ENCODE measurements at regions of chr16 and their contacts with region 1.

Region 1: GRCh38 chr16:49857423-49858181 is 1.7 kb upstream of the ZNF423 start:
- DNase-seq: peak; percentile 51
- H3K4me3 Mint-ChIP-seq: peak overlapping the region; percentile 61
- H3K27ac Mint-ChIP-seq: no peak overlapping the region
- H3K4me1 Mint-ChIP-seq: peaks cover 14% of the 10 kb centered on the region
- H3K27me3 Mint-ChIP-seq: peaks cover 46% of the 10 kb centered on the region

Region 2: DNA sequence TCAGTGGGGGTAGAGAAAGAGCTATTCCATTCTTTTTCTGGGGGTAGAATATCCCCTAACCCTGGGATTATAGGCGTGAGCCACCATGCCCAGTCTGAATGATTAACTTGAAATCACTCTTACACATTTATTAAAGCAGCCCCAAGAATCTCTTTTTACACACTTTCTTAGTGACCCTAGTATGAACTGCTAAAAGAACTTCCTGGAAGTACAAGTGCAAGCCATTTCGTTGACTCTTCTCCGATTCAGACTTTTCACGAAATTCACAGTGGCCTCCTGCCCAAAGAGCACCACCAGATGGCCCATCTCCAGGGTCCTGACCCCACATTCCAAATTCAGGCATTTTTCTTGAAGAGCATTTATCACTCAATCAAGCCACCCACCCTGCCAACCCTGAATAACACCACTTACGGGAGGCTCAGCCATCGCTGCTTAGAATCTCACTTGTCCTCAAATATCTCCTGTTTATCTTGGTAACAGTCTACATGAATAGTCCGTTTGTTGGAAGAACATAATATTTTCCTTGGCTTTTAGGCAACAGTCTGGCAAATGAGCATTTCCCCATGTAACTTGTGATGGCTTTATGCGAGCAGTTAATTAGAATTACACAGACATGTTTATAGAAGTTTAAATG is 29.7 kb before region 1 on chr16:
- CTCF ChIA-PET with region 1: no interaction called
- POLR2A ChIA-PET with region 1: no interaction called
- DNase-seq: no peak
- H3K4me3 Mint-ChIP-seq: no peak overlapping the region
- H3K27ac Mint-ChIP-seq: no peak overlapping the region
- H3K4me1 Mint-ChIP-seq: no peaks in the 10 kb centered on the region
- H3K27me3 Mint-ChIP-seq: peaks cover 6% of the 10 kb centered on the region

Region 3: GRCh38 chr16:49867796-49868668 is 10.4 kb after region 1 on chr16:
- CTCF ChIA-PET with region 1: interaction called, 11 read pairs
- POLR2A ChIA-PET with region 1: no interaction called
- DNase-seq: no peak
- H3K4me3 Mint-ChIP-seq: no peak overlapping the region
- H3K27ac Mint-ChIP-seq: no peak overlapping the region
- H3K4me1 Mint-ChIP-seq: no peaks in the 10 kb centered on the region
- H3K27me3 Mint-ChIP-seq: peaks cover 14% of the 10 kb centered on the region

Region 4: DNA sequence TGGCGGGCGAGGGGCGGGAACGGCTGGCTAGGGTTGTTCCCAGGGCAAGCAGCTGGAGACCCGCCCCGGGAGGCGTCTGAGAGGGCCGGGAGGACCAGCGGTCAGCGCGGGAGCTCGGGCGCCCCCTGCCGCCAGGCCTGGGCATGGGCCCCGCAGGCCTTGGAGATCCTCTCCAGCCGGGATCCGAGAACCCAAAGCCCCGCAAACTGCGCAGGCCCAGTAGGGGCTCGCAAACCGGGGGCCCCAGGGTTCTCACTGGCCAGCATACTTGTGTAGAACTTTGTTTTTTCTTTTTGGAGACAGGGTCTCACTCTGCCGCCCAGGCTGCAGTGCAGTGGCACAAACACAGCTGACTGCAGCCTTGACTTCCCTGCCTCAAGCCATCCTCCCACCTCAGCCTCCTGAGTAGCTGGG is 19.1 kb after region 1 on chr16:
- CTCF ChIA-PET with region 1: interaction called, 13 read pairs
- POLR2A ChIA-PET with region 1: no interaction called
- DNase-seq: peak; percentile 41
- H3K4me3 Mint-ChIP-seq: no peak overlapping the region
- H3K27ac Mint-ChIP-seq: no peak overlapping the region
- H3K4me1 Mint-ChIP-seq: no peaks in the 10 kb centered on the region
- H3K27me3 Mint-ChIP-seq: peaks cover 28% of the 10 kb centered on the region

Region 5: GRCh38 chr16:50067290-50067853 is 209.8 kb after region 1 on chr16:
- CTCF ChIA-PET with region 1: no interaction called
- POLR2A ChIA-PET with region 1: no interaction called
- DNase-seq: peak; percentile 55
- H3K4me3 Mint-ChIP-seq: peak overlapping the region; percentile 87
- H3K27ac Mint-ChIP-seq: peak overlapping the region; percentile 77
- H3K4me1 Mint-ChIP-seq: peaks cover 49% of the 10 kb centered on the region
- H3K27me3 Mint-ChIP-seq: no peaks in the 10 kb centered on the region

Measured in activated CD4-positive, alpha-beta memory T cell treated with anti-CD3 and anti-CD28 coated beads, Interleukin-2, amount 10 ng/mL, durations not matched to agents 7 days and 5 days (primary cell).